Cardiac septum (tissue), 1 donor: ENCODE measurements at regions of chr3 and their contacts with region 1.

Region 1: GRCh38 chr3:159130108-159130507 is 328.3 kb downstream of the MFSD1 start:
- DNase-seq: no peak

Region 2: GRCh38 chr3:159252772-159253384 is 122.8 kb after region 1 on chr3:
- intact Hi-C with region 1: loop called (anchors 10 kb)
- DNase-seq: no peak

Region 3: DNA sequence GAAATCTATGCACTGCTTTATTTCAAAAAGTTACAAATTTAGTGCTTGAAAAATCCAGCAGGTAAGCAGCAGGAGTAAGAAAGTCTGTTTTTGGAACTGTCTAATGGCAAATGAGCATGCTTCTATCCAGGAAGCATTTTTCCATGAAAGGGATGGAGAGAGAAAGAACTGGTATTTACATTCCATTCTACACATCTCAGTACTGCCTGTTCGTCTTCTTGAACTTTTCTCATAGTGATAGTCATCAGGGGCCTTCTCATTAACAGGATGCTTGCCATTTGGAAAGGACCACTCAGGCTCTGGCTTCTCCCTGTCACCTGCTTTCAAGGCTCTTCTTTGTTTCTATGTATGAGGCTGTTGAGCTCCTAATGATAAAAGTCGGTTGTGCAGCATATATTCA is 591.2 kb after region 1 on chr3:
- intact Hi-C with region 1: no loop called
- DNase-seq: no peak